Psoas muscle (tissue), 8 donors: ENCODE measurements at regions of chr2 and their contacts with region 1.

Region 1: DNA sequence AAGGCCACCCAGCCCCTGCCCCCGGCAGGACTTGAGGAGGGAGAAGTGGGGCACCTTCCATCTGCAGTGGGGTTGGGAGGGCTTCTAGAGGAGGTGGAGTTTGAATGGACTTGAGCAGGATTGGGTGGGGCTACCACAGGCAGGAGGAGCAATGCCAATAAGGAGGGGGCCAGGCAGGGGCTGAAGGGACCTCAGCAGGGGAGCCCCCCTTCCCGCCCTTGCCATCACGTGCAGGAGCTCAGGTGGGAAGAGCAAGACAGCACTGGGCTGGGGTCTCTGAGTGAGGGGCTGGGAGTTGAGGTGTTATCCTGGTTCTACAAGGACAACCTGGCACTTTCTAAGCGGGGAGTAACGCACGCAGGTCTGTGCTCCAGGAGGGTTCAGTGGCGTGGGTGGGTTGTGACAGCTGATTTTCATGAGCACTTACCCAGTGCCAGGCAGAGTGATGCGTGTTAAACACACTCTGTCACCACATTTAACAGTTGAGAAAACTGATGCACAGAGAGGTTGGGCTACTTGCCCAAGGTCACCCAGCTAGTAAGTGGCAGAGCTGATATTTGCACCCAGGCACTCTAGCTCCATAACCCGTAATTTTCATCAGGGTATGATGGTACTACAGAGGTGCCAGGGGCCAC is 4.8 kb downstream of the CHRND start:
- DNase-seq: peak in 1 of 2 donors; percentile 31
- ATAC-seq: no peak
- H3K4me3 ChIP-seq: no peak overlapping the region
- H3K27ac ChIP-seq: no peak overlapping the region
- H3K4me1 ChIP-seq: peaks cover 22% of the 10 kb centered on the region
- H3K27me3 ChIP-seq: no peaks in the 10 kb centered on the region
- CTCF ChIP-seq: no peak

Region 2: DNA sequence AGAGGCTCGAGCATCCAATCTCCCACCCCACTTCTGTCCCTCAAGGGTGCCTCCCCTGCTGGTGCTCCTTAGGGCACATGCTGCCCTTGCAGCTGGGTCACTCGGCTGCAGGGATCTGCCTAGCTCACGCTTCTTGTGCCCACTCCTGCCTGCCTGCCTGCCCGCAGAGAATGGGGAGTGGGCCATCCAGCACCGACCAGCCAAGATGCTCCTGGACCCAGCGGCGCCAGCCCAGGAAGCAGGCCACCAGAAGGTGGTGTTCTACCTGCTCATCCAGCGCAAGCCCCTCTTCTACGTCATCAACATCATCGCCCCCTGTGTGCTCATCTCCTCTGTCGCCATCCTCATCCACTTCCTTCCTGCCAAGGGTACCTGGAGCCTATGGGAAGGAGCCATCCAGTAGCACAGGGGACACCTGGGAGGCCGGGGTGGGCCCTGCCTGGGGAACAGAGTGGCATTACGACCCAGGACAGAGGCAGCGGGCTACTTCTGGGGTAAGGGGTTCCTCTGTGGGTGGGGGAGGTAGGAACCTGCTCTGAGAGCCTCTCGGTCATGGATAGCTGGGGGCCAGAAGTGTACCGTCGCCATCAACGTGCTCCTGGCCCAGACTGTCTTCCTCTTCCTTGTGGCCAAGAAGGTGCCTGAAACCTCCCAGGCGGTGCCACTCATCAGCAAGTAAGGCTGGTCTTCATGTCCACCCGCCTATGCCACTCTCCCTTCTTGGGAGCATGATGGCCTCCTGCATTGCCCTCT is 12.1 kb after region 1 on chr2:
- intact Hi-C with region 1: loop called in 1 of 2 experiments (anchors 1 kb)
- DNase-seq: peak in 1 of 2 donors; percentile 41
- ATAC-seq: no peak
- H3K4me3 ChIP-seq: no peak overlapping the region
- H3K27ac ChIP-seq: no peak overlapping the region
- H3K4me1 ChIP-seq: peaks cover 9% of the 10 kb centered on the region
- H3K27me3 ChIP-seq: no peaks in the 10 kb centered on the region
- CTCF ChIP-seq: no peak

Region 3: DNA sequence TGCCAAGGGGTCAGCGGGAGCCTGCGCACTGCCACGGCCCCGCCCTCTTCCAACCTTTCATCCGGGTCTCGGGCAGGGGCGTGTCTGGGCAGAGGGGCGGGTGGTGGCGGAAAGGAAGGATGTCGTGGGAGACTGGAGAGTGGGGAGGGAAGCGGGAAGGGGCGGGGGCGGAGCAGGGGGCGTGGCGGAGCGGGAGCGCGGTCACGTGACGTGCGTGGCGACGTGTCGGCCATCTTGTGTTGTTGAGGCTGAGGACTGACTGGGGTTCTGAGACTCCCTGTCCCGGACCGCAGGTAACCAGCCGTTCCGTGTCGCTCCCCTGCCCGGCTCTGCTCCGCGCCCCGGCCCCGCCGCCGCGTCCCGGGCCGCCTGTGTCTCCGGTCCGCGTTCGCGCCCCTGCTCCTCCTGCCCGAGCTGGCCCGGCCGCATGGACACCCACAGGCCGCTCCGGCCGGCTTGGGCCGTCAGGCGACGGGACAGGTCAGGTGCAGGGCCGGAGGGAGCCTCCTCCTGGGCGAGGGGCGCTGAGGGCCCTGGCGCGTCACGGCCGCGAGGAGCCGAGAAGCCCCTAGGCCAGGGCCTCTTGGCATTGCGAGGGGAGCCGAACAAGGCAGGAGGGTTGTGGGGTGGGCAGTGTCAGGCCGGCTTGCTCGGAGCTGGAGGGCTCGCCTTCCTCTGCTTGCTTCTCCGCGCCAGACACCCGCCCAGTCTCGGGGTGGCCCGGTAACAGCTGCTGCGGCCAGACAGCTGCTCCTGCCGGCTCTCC is 166.5 kb after region 1 on chr2 and contains the start of gene GIGYF2:
- intact Hi-C with region 1: no loop called
- DNase-seq: peak; percentile 97 to 98
- ATAC-seq: peak; percentile 97 to 99 (median 97)
- H3K4me3 ChIP-seq: peak within 1 kb of the TSS; percentile 95
- H3K27ac ChIP-seq: peak within 1 kb of the TSS; percentile 99
- H3K4me1 ChIP-seq: peaks cover 35% of the 10 kb centered on the region
- H3K27me3 ChIP-seq: no peaks in the 10 kb centered on the region
- CTCF ChIP-seq: no peak
- total RNA-seq, gene GIGYF2: 64.3 to 72.6 (median 65.5) TPM